ENCODE measurements at regions of chr15 and their contacts with region 1.

Region 1: GRCh38 chr15:88630131-88630721 is 8.6 kb upstream of the ISG20 start:
- DNase-seq: no peak
- ATAC-seq: no peak
- H3K4me3 ChIP-seq: peak overlapping the region in 1 of 5 experiments; percentile 6
- H3K4me3 Mint-ChIP-seq: peak overlapping the region; percentile 40
- H3K27ac ChIP-seq: peak overlapping the region; percentile 42 to 51
- H3K27ac Mint-ChIP-seq: peak overlapping the region; percentile 87
- H3K4me1 ChIP-seq: peaks cover 68 to 84% of the 10 kb centered on the region in 2 donors
- H3K4me1 Mint-ChIP-seq: peaks cover 79% of the 10 kb centered on the region
- H3K27me3 ChIP-seq: no peaks in the 10 kb centered on the region
- H3K27me3 Mint-ChIP-seq: no peaks in the 10 kb centered on the region
- CTCF ChIP-seq: no peak

Region 2: GRCh38 chr15:88657326-88658069 is 27.3 kb after region 1 on chr15:
- CTCF ChIA-PET with region 1: interaction called, 120 read pairs
- POLR2A ChIA-PET with region 1: interaction called, 10 read pairs
- intact Hi-C with region 1: loop called (anchors 1 kb)
- DNase-seq: peak; percentile 47
- ATAC-seq: no peak
- H3K4me3 ChIP-seq: no peak overlapping the region
- H3K4me3 Mint-ChIP-seq: peak overlapping the region; percentile 82
- H3K27ac ChIP-seq: peak overlapping the region; percentile 80 to 85
- H3K27ac Mint-ChIP-seq: peak overlapping the region; percentile 98
- H3K4me1 ChIP-seq: peaks cover 58 to 69% of the 10 kb centered on the region in 2 donors
- H3K4me1 Mint-ChIP-seq: peaks cover 69% of the 10 kb centered on the region
- H3K27me3 ChIP-seq: no peaks in the 10 kb centered on the region
- H3K27me3 Mint-ChIP-seq: no peaks in the 10 kb centered on the region
- CTCF ChIP-seq: no peak

Region 3: DNA sequence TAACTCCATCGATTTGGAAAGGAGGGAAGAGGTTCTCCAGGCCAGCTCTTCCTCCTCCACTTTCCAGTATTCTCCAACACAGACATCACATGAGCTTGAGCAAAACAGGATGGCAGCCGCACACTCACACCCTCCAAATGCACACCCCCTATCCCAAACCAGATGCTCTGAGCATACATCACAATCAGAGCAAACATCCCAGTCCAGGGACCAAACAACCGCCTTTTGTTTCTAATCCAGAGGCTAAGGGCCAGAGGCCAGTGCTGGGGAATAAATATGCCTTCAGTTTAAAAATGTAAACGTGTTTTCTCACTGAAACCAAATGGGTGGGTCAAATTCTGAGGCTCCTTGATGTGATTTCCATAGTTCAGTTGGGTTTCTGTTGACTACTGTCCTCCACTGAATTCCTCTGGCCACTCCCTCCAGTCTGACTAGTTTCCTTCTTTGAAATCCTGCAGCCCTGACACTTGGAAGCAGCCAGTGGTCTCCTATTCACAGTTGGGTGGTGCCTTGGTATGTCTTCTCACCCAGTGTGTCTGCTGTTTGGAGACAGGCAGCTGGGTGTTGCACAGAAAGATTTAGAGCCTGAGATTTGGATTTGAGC is 302.1 kb after region 1 on chr15:
- CTCF ChIA-PET with region 1: no interaction called
- POLR2A ChIA-PET with region 1: no interaction called
- intact Hi-C with region 1: no loop called
- DNase-seq: no peak
- ATAC-seq: no peak
- H3K4me3 ChIP-seq: no peak overlapping the region
- H3K4me3 Mint-ChIP-seq: no peak overlapping the region
- H3K27ac ChIP-seq: no peak overlapping the region
- H3K27ac Mint-ChIP-seq: no peak overlapping the region
- H3K4me1 ChIP-seq: no peaks in the 10 kb centered on the region
- H3K4me1 Mint-ChIP-seq: no peaks in the 10 kb centered on the region
- H3K27me3 ChIP-seq: peaks cover 0 to 13% (median 4%) of the 10 kb centered on the region in 4 experiments
- H3K27me3 Mint-ChIP-seq: peaks cover 52% of the 10 kb centered on the region
- CTCF ChIP-seq: no peak